AG04449 (cell line): ENCODE measurements at regions of chr15 and their contacts with region 1.

Region 1: DNA sequence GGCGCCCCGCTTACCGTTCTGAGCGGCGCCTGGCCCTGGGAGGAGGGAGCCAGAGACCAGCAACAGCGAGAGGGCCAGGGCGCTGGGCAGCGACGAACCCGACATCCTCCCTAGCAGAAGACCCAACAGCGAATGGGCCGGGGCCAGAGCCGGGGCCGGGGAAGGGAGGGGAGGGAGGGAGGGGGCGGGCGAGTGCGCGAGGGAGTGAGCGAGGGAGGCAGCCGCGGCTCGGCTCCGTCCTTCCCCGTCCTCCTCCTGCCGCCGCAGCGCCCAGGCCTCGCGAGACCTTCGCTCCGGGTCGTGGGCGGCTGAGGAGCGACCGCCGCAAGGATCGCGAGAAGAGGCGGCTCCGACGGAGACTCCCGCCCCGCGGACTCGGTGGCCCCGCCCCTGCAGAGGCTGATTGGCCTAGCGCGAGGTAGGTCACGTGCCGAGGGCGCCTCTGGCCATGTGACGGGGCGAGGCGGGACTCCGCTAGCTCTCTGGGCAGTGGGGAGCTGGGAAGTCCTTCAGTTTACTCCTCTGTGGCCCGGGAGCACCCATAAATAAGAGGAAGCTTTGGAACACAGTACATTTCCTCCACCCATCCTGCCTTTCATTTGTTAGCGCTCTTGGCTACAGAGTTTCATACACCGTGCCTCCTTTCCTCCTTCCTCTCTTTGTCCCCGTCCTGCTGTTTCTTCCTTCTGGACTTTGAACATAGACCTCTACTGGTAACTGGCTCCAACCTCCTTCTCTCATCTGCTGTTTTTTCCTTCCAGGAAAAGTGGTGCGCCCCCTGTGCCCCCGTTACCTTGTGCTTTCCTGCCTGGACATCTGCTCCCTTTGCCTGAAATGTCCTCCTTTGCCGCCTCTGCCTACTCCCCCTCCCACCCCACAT is at the start of gene NPTN:
- DNase-seq: peak; percentile 81
- H3K4me3 ChIP-seq: peak within 1 kb of the TSS; percentile 92
- CTCF ChIP-seq: no peak

Region 2: DNA sequence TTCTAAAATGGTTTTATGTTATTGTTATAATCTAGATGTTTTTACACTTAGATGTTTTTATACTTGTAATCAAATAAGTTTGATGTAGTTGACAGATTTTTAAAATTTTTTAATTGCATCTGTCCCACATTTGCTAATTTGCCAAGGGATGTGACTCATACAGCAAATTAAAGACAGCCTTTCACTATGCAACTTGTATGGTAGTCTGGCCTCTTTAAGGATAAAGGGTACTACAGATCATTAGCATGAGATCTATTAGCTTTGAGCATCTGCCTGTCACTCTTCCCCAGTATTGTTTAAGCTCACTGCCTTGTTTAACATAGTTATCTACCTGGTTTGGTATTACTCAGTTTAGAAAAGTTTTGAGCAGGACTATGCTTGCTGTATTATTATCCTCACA is 83.2 kb before region 1 on chr15:
- CTCF ChIA-PET with region 1: interaction called, 17 read pairs
- POLR2A ChIA-PET with region 1: no interaction called
- DNase-seq: no peak
- H3K4me3 ChIP-seq: no peak overlapping the region
- CTCF ChIP-seq: no peak

Region 3: DNA sequence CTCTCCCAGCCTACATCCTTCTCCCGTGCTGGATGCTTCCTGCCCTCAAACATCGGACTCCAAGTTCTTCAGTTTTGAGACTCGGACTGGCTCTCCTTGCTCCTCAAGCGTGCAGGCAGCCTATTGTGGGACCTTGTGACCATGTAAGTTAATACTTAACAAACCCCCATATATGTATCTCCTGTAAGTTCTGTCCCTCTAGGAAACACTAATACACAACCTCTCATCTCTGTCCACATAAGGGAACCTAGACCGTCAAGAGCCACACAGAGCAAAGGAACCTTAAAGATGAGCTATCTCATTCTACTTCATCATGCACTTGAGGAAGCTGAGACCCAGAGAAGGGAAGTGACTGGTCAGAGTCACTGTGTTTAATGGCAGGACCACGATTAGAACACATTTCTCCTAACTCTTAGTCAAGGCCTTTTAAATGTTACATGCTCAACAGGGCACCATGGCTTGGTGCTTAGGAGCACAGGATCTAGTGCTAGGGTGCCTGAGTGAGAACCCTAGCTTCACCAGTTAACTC is 50.4 kb before region 1 on chr15:
- CTCF ChIA-PET with region 1: interaction called, 13 read pairs
- POLR2A ChIA-PET with region 1: no interaction called
- DNase-seq: no peak
- H3K4me3 ChIP-seq: no peak overlapping the region
- CTCF ChIP-seq: no peak

Region 4: GRCh38 chr15:73608941-73609340 is 24.4 kb before region 1 on chr15:
- CTCF ChIA-PET with region 1: interaction called, 100 read pairs
- POLR2A ChIA-PET with region 1: interaction called, 20 read pairs
- DNase-seq: no peak
- H3K4me3 ChIP-seq: no peak overlapping the region
- CTCF ChIP-seq: no peak

Region 5: GRCh38 chr15:73660455-73660854 is 27.1 kb after region 1 on chr15:
- CTCF ChIA-PET with region 1: interaction called, 22 read pairs
- POLR2A ChIA-PET with region 1: no interaction called
- DNase-seq: no peak
- H3K4me3 ChIP-seq: no peak overlapping the region
- CTCF ChIP-seq: no peak

Region 6: DNA sequence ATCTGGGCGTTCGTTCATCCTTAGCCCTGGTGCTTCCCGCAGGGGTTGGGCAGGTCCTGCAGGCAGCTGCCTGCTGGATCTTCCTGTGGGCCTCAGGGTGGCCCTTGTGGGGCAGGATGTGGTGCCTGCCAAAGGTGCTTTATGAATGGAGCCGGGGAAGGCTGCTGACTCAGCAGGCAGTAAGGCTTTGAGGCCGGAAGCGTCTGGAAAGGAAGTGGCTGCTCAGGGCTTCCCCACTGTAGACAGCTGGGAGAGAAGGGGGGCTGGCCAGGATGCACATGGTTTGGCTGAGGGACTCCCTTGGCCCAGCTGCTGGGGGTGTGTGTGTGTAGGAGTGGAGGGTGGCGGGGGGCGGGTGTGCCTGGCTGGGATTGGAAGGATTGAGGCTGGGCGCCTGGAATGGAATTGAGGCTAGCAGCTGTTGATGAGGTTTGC is 63.7 kb after region 1 on chr15:
- CTCF ChIA-PET with region 1: interaction called, 459 read pairs
- POLR2A ChIA-PET with region 1: interaction called, 4 read pairs
- DNase-seq: peak; percentile 44
- H3K4me3 ChIP-seq: no peak overlapping the region
- CTCF ChIP-seq: no peak

Region 7: DNA sequence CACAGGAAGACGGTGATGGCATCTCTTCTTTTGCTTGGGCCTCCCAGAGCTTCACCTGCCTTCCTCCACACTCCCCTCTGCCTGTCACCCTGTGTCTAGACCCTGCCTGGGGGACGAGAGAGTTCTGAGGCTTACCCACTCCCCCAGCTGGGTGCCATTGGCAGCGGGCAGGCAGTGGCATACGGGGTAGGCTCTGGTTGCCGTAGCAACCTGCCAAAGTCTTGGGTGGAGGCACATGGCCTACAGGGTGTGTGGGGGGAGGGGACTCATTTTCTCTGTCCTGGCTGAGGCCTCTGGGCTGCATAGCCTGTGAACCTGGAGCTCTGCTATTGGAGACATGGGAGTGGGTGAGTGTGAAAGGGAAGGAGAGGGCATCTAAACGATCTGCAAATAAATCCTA is 115.4 kb after region 1 on chr15:
- CTCF ChIA-PET with region 1: no interaction called
- POLR2A ChIA-PET with region 1: no interaction called
- DNase-seq: no peak
- H3K4me3 ChIP-seq: no peak overlapping the region
- CTCF ChIP-seq: no peak

Region 8: DNA sequence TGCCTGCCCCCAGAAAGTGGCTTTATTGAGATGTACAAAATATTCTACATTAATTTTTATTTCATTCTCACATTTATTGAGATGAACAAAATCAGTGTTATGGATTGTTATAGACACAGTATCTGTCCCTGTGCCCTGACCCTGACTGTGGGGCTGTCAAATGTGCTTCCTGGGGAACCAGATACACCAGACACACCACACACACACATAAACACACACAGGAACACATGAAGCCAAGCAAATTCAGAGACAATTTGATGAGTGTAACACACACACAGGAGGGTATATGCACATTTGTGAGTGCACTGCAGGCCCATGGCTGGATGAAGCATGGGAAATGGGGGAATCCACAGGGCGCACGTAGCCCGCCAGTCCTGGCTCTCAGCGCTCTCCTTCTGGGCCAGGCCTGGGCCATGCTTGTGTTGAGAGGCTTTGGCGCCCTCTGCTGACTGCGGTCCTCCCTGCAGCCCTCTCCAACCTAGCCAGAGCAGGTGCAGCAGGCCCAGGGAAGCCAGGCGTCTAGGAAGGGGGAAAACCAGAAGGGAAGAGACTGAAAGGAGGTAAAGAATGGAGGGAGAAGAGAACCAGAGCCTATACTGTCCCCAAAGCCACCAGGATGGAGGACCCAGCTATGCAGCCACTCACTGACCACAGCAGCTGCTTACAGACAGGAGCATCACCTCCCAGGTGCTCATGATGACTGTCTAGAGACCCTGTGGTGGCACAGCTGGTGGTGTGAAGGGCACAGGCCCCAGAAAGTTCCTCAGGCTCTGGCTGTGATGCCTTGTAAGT is 274.9 kb after region 1 on chr15:
- CTCF ChIA-PET with region 1: interaction called, 16 read pairs
- POLR2A ChIA-PET with region 1: no interaction called
- DNase-seq: no peak
- H3K4me3 ChIP-seq: no peak overlapping the region
- CTCF ChIP-seq: peak; percentile 98